Caco-2 (cell line): ENCODE measurements at regions of chr17 and their contacts with region 1.

Region 1: DNA sequence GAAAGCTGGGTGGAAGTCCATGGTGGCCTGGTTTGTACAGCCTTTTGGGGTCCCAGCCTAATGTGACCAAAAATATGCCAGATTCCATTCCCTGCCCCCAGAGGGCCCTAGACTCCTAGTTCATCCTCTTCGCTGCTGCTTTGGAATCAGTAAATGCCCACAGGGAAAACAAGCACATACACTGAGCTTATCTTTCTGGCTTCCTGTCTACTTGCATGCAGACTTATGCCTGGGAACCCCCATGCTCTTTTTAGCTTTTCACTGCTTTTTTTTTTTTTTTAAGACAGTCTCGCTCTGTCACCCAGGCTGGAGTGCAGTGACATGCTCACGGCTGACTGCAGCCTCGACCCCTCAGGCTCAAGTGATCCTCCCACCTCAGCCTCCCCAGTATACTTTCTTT is 6.2 kb upstream of the CD300LG start:
- DNase-seq: peak in 1 of 2 experiments; percentile 49
- H3K4me3 ChIP-seq: no peak overlapping the region
- H3K4me3 Mint-ChIP-seq: no peak overlapping the region
- H3K27ac Mint-ChIP-seq: no peak overlapping the region
- H3K4me1 ChIP-seq: peaks cover 9% of the 10 kb centered on the region; the same call in 1 of the 2 replicates
- H3K4me1 Mint-ChIP-seq: peaks cover 20% of the 10 kb centered on the region
- H3K27me3 ChIP-seq: no peaks in the 10 kb centered on the region
- H3K27me3 Mint-ChIP-seq: peaks cover 10% of the 10 kb centered on the region
- CTCF ChIP-seq: peak; percentile 29 to 35

Region 2: DNA sequence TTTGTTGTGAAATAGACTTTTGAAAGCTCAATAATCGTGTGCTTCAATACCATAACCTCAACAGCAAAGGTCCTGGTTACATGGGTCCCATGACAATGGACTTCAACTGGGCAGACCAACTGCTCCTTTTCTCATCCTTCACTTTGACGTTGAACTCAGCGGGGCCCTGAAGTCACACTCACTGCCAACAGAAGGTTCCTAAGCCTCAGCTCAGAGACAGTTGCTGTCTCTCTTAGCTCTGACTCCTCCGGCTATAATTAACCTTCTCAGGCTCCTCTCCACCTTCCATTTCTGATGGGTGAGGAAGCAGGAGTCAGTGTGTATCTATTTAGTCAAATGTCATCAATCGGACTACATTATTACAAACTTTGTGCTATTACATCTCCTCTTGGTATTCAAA is 31.7 kb before region 1 on chr17:
- CTCF ChIA-PET with region 1: interaction called, 8 read pairs
- POLR2A ChIA-PET with region 1: interaction called, 10 read pairs
- intact Hi-C with region 1: no loop called
- DNase-seq: no peak
- H3K4me3 ChIP-seq: no peak overlapping the region
- H3K4me3 Mint-ChIP-seq: no peak overlapping the region
- H3K27ac Mint-ChIP-seq: no peak overlapping the region
- H3K4me1 ChIP-seq: no peaks in the 10 kb centered on the region
- H3K4me1 Mint-ChIP-seq: peaks cover under 1% of the 10 kb centered on the region
- H3K27me3 ChIP-seq: no peaks in the 10 kb centered on the region
- H3K27me3 Mint-ChIP-seq: no peaks in the 10 kb centered on the region
- CTCF ChIP-seq: no peak